ENCODE measurements at regions of chr7 and their contacts with region 1.

Region 1: GRCh38 chr7:46654546-46655443 is 733.7 kb upstream of the IGFBP3 start:
- DNase-seq: no peak
- H3K4me3 Mint-ChIP-seq: no peak overlapping the region
- H3K27ac Mint-ChIP-seq: peak overlapping the region; percentile 69
- H3K4me1 Mint-ChIP-seq: peaks cover 31% of the 10 kb centered on the region
- H3K27me3 Mint-ChIP-seq: no peaks in the 10 kb centered on the region
- CTCF ChIP-seq: peak; percentile 48

Region 2: DNA sequence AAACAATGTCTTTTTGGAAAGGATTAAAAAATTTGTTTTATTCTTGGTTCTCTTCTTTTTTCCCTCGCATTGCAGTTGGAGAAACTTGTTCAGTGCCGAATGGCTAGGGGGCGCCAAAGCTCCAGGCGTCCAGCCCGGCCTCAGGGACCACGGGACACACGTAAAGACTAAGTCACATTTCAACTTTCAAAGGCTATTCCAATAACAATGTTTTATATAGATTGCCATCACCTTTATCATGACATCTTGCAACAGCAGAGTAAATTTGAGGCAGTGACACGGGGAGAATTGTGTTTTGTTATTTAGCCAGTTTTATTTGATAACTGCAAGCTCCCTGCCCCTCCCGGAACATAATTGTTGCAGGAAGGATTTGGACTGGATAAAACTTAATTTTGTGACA is 731.5 kb before region 1 on chr7:
- CTCF ChIA-PET with region 1: interaction called, 4 read pairs
- intact Hi-C with region 1: loop called (anchors 1 kb)
- DNase-seq: peak; percentile 95
- H3K4me3 Mint-ChIP-seq: peak overlapping the region; percentile 99
- H3K27ac Mint-ChIP-seq: peak overlapping the region; percentile 73
- H3K4me1 Mint-ChIP-seq: peaks cover 40% of the 10 kb centered on the region
- H3K27me3 Mint-ChIP-seq: no peaks in the 10 kb centered on the region
- CTCF ChIP-seq: peak; percentile 95

Region 3: GRCh38 chr7:46369933-46370654 is 284.7 kb before region 1 on chr7:
- CTCF ChIA-PET with region 1: no interaction called
- intact Hi-C with region 1: loop called (anchors 5 kb)
- DNase-seq: no peak
- H3K4me3 Mint-ChIP-seq: no peak overlapping the region
- H3K27ac Mint-ChIP-seq: no peak overlapping the region
- H3K4me1 Mint-ChIP-seq: no peaks in the 10 kb centered on the region
- H3K27me3 Mint-ChIP-seq: no peaks in the 10 kb centered on the region
- CTCF ChIP-seq: no peak

Region 4: DNA sequence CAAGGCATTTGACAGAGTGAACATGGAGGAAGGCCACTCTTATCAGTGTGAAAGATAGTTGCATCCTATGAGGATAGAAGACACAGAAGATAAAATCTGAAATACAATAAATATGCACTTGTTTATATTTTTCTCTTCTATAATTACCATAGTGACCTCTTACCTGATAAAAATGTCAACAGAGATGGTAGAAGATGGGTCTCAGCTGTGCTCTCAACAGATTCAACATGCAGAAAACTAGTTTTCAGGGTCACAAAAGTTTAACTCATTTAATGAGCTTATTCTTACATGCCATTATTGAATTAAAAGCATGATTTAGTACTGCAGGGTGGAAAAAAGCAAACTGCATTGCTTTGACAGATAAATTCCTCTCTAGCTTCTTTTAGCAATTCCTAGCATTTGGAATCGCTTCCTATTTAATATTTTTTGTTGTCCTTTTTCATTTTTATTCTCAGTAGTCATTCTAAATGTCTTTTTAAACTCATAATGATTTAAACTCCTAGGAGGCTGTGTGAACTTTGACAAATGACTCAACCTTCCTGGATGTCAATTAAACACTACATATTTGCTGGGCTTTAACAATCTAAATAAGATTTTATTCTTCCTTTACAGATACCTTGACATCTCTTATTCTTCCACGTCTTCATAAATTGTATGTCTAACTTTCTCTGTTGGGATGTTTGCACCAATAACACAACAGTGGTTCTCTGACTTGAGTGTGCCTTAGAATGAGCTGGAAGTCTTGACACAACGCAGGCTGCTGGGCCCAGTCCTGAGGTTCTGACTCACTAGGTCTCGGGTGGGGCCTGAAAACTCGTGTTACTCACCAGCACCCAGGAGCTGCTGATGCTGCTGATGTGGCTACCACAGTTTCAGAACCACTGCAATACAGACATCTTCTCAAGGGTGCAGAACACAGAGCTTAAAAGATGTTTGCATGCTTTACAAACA is 168.3 kb before region 1 on chr7:
- CTCF ChIA-PET with region 1: interaction called, 5 read pairs
- intact Hi-C with region 1: loop called (anchors 2 kb)
- DNase-seq: peak; percentile 60
- H3K4me3 Mint-ChIP-seq: peak overlapping the region; percentile 19
- H3K27ac Mint-ChIP-seq: peak overlapping the region; percentile 83
- H3K4me1 Mint-ChIP-seq: peaks cover 50% of the 10 kb centered on the region
- H3K27me3 Mint-ChIP-seq: no peaks in the 10 kb centered on the region
- CTCF ChIP-seq: no peak

Region 5: GRCh38 chr7:46569133-46569465 is 85.7 kb before region 1 on chr7:
- CTCF ChIA-PET with region 1: interaction called, 14 read pairs
- intact Hi-C with region 1: loop called (anchors 1 kb)
- DNase-seq: peak; percentile 86
- H3K4me3 Mint-ChIP-seq: peak overlapping the region; percentile 56
- H3K27ac Mint-ChIP-seq: peak overlapping the region; percentile 75
- H3K4me1 Mint-ChIP-seq: peaks cover 94% of the 10 kb centered on the region
- H3K27me3 Mint-ChIP-seq: no peaks in the 10 kb centered on the region
- CTCF ChIP-seq: no peak

Region 6: DNA sequence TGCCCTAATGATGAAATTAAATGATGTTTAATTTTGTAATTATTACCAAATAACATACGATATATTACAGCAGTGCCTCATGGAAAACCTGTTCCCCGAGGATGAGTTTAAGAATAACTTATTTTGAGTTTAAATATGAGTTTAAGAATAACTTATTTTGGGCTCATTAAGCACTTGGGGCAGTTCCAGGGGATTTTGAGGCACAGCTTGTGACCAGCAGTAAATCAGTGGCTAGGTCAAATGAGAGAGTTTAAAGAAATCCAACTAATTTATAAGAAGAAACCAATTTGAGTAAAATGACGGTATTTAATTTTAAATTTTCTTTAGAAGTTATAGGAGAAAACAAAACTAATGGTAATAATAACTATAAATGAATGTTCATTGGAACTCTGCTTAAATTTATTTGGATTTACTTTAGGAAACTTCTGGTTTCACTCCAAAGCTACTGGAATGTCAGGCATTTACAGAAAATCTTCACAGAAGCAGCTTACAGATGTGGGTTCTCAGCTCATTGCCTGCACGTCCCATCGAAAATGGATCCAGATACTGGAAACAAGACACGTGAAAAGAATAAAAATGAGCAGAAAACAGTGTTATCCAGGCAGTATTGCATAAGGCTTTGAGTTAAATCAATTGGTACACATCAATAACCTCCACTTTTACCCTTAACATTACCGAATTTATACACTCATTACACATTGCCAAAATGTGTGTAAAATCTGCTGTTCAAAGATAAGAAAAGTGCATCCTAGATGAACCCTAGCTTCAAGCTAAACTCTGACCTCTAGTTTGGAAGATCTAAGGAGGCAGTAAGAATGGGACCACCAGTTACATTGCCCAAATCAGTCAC is 50.8 kb after region 1 on chr7:
- CTCF ChIA-PET with region 1: no interaction called
- intact Hi-C with region 1: no loop called
- DNase-seq: no peak
- H3K4me3 Mint-ChIP-seq: no peak overlapping the region
- H3K27ac Mint-ChIP-seq: no peak overlapping the region
- H3K4me1 Mint-ChIP-seq: no peaks in the 10 kb centered on the region
- H3K27me3 Mint-ChIP-seq: no peaks in the 10 kb centered on the region
- CTCF ChIP-seq: no peak

Region 7: GRCh38 chr7:46764100-46764936 is 109.5 kb after region 1 on chr7:
- CTCF ChIA-PET with region 1: no interaction called
- intact Hi-C with region 1: loop called (anchors 5 kb)
- DNase-seq: peak; percentile 90
- H3K4me3 Mint-ChIP-seq: peak overlapping the region; percentile 4
- H3K27ac Mint-ChIP-seq: peak overlapping the region; percentile 80
- H3K4me1 Mint-ChIP-seq: peaks cover 30% of the 10 kb centered on the region
- H3K27me3 Mint-ChIP-seq: no peaks in the 10 kb centered on the region
- CTCF ChIP-seq: no peak

Region 8: DNA sequence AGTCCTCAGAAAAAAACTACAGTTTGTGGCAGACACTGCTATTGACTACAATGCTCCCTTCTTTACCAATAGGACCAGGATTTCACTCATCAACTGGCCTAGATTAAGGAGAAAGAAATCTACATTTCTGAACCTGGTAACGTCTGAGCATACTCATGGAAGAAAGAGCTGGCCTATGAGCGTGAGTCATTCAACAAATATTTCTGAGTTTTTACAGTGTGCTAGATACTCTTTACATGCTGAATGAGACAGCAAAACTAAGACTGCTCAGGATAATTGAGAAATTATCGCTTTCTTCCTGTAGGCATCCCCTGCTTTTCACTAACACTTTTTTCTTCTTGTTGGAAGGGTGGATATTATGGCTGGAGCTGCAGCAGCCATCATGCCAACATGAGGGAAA is 317.4 kb after region 1 on chr7:
- CTCF ChIA-PET with region 1: no interaction called
- intact Hi-C with region 1: loop called (anchors 1 kb)
- DNase-seq: peak; percentile 25
- H3K4me3 Mint-ChIP-seq: no peak overlapping the region
- H3K27ac Mint-ChIP-seq: peak overlapping the region; percentile 100
- H3K4me1 Mint-ChIP-seq: peaks cover 54% of the 10 kb centered on the region
- H3K27me3 Mint-ChIP-seq: no peaks in the 10 kb centered on the region
- CTCF ChIP-seq: no peak